Aorta (tissue), 5 donors: ENCODE measurements at regions of chr18 and their contacts with region 1.

Region 1: GRCh38 chr18:12934454-12935071 is 13.2 kb upstream of the SEH1L start:
- DNase-seq: peak; percentile 89 to 95
- ATAC-seq: peak; percentile 85
- H3K4me3 ChIP-seq: no peak overlapping the region
- H3K27ac ChIP-seq: no peak overlapping the region
- H3K4me1 ChIP-seq: no peaks in the 10 kb centered on the region
- H3K27me3 ChIP-seq: no peaks in the 10 kb centered on the region

Region 2: DNA sequence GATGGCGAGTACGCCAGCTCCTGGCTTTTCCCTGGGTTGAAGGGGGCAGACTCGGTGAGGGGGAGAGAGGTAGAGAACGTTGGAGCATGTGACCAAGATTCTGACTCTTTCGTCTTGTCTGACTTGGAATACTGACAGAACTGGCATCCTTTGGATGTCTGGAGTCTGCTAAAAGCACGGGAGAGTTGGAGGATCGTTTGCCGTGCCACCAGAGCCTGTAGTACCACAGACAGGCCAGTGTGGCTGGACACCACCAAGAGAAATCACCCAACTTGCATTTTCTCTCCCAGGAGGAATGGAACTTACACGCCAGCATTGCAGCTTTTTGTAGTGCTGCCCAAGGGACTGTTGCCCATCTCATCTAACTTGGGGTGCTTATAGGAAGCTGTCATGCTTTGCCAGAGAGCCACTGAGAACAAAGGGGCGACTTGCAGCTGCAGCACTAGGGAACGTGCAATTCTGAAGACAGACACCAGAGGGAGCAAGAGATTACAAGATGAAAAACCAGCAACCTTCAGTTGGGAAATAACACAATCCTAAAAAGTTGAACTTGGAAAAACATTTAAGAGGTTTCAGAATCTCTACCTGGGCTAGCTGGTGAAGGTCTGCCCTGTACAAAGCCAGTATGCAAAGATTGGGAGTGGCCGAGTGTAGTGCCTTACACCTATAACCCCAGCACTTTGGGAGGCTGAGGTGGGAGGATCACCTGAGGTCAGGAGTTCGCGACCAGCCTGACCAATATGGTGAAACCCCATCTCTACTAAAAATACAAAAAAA is 207.6 kb before region 1 on chr18:
- intact Hi-C with region 1: loop called (anchors 1 to 2 kb)
- DNase-seq: no peak
- ATAC-seq: peak; percentile 83
- H3K4me3 ChIP-seq: no peak overlapping the region
- H3K27ac ChIP-seq: no peak overlapping the region
- H3K4me1 ChIP-seq: no peaks in the 10 kb centered on the region
- H3K27me3 ChIP-seq: no peaks in the 10 kb centered on the region

Region 3: GRCh38 chr18:12745095-12745795 is 189.3 kb before region 1 on chr18:
- intact Hi-C with region 1: loop called in 1 of 2 experiments (anchors 5 kb)
- DNase-seq: no peak
- ATAC-seq: no peak
- H3K4me3 ChIP-seq: no peak overlapping the region
- H3K27ac ChIP-seq: no peak overlapping the region
- H3K4me1 ChIP-seq: no peaks in the 10 kb centered on the region
- H3K27me3 ChIP-seq: no peaks in the 10 kb centered on the region

Region 4: DNA sequence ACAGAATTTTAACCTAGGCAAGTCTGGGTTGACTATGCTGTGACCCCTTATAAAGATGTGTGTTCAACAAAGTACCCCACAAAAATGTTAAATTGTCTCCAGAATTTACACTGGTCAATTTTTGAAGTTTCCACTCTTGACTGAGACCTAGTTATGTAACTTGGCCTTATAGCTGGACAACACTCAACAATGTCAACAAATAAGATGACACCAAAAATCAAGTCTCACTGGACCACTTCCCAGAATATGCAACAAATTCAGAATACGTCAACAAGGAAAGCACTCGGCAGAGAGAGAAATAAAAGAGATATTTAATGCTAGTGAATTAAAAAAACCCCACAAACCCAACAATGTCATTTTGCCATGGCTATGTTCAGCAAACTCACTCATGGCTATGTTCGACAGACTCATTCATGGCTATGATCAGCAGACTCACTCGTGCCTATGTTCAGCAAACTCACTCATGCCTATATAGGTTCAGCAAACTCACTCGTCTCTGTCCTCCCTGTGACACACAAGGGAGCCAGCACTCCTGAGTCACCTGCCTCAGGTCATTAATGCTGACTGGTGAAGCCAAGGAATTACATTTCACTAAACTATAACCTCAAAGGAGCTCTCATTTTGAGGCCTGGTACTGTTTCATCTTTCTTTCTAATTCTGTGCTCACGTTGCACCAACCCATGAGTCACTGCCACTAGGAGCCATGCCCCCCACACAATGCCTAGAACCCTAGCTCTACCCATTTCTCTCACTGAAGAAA is 123.2 kb before region 1 on chr18:
- intact Hi-C with region 1: no loop called
- DNase-seq: no peak
- ATAC-seq: no peak
- H3K4me3 ChIP-seq: no peak overlapping the region
- H3K27ac ChIP-seq: no peak overlapping the region
- H3K4me1 ChIP-seq: no peaks in the 10 kb centered on the region
- H3K27me3 ChIP-seq: no peaks in the 10 kb centered on the region

Region 5: GRCh38 chr18:12857215-12857905 is 77.2 kb before region 1 on chr18:
- intact Hi-C with region 1: loop called in 1 of 2 experiments (anchors 2 kb)
- DNase-seq: no peak
- ATAC-seq: no peak
- H3K4me3 ChIP-seq: no peak overlapping the region
- H3K27ac ChIP-seq: no peak overlapping the region
- H3K4me1 ChIP-seq: no peaks in the 10 kb centered on the region
- H3K27me3 ChIP-seq: no peaks in the 10 kb centered on the region

Region 6: GRCh38 chr18:12890506-12890905 is 44.1 kb before region 1 on chr18:
- intact Hi-C with region 1: loop called (anchors 5 kb)
- DNase-seq: no peak
- ATAC-seq: no peak
- H3K4me3 ChIP-seq: no peak overlapping the region
- H3K27ac ChIP-seq: no peak overlapping the region
- H3K4me1 ChIP-seq: no peaks in the 10 kb centered on the region
- H3K27me3 ChIP-seq: no peaks in the 10 kb centered on the region

Region 7: DNA sequence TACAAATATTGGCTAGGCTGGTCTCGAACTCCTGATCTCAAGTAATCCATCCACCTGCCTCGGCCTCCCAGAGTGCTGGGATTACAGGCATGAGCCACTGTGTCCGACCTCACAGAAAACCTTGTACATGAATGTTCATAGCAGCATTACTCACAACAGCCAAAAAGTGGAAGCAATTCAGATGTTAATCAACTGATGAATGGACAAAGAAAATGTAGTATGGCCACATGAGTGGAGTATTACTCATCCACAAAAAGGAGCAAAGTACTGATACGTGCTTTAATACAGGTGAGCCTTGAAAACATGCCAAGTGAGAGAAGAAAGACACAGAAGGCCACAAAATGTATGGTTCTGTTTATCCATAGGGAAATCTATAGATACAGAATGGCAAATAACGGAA is 77.2 kb after region 1 on chr18:
- intact Hi-C with region 1: no loop called
- DNase-seq: no peak
- ATAC-seq: no peak
- H3K4me3 ChIP-seq: no peak overlapping the region
- H3K27ac ChIP-seq: no peak overlapping the region
- H3K4me1 ChIP-seq: no peaks in the 10 kb centered on the region
- H3K27me3 ChIP-seq: no peaks in the 10 kb centered on the region

Region 8: GRCh38 chr18:13025233-13025632 is 90.7 kb after region 1 on chr18:
- intact Hi-C with region 1: no loop called
- DNase-seq: no peak
- ATAC-seq: no peak
- H3K4me3 ChIP-seq: no peak overlapping the region
- H3K27ac ChIP-seq: no peak overlapping the region
- H3K4me1 ChIP-seq: no peaks in the 10 kb centered on the region
- H3K27me3 ChIP-seq: no peaks in the 10 kb centered on the region